Activated CD4-positive, alpha-beta T cell treated with anti-CD3 and anti-CD28 coated beads for 36 hours (primary cell): ENCODE measurements at regions of chr6 and their contacts with region 1.

Region 1: GRCh38 chr6:139262519-139263300 is 29.1 kb downstream of the TXLNB start:
- DNase-seq: peak; percentile 56
- ATAC-seq: peak; percentile 97
- H3K4me3 Mint-ChIP-seq: peak overlapping the region; percentile 65
- H3K27ac Mint-ChIP-seq: peak overlapping the region; percentile 93
- H3K4me1 Mint-ChIP-seq: peaks cover 38% of the 10 kb centered on the region
- H3K27me3 Mint-ChIP-seq: no peaks in the 10 kb centered on the region

Region 2: GRCh38 chr6:139153855-139154254 is 108.9 kb before region 1 on chr6:
- CTCF ChIA-PET with region 1: no interaction called
- POLR2A ChIA-PET with region 1: no interaction called
- intact Hi-C with region 1: loop called (anchors 2 kb)
- DNase-seq: no peak
- ATAC-seq: peak; percentile 47
- H3K4me3 Mint-ChIP-seq: peak overlapping the region; percentile 30
- H3K27ac Mint-ChIP-seq: peak overlapping the region; percentile 100
- H3K4me1 Mint-ChIP-seq: peaks cover 82% of the 10 kb centered on the region
- H3K27me3 Mint-ChIP-seq: no peaks in the 10 kb centered on the region

Region 3: GRCh38 chr6:139250296-139251044 is 12.2 kb before region 1 on chr6:
- CTCF ChIA-PET with region 1: interaction called, 16 read pairs
- POLR2A ChIA-PET with region 1: interaction called, 4 read pairs
- intact Hi-C with region 1: loop called in 1 of 2 experiments (anchors 1 kb)
- DNase-seq: peak; percentile 76
- ATAC-seq: peak; percentile 83
- H3K4me3 Mint-ChIP-seq: no peak overlapping the region
- H3K27ac Mint-ChIP-seq: peak overlapping the region; percentile 76
- H3K4me1 Mint-ChIP-seq: peaks cover 52% of the 10 kb centered on the region
- H3K27me3 Mint-ChIP-seq: no peaks in the 10 kb centered on the region

Region 4: GRCh38 chr6:139278190-139278589 is 15.5 kb after region 1 on chr6:
- CTCF ChIA-PET with region 1: interaction called, 10 read pairs
- POLR2A ChIA-PET with region 1: interaction called, 4 read pairs
- intact Hi-C with region 1: loop called (anchors 2 kb)
- DNase-seq: no peak
- ATAC-seq: no peak
- H3K4me3 Mint-ChIP-seq: no peak overlapping the region
- H3K27ac Mint-ChIP-seq: no peak overlapping the region
- H3K4me1 Mint-ChIP-seq: peaks cover 28% of the 10 kb centered on the region
- H3K27me3 Mint-ChIP-seq: no peaks in the 10 kb centered on the region

Region 5: DNA sequence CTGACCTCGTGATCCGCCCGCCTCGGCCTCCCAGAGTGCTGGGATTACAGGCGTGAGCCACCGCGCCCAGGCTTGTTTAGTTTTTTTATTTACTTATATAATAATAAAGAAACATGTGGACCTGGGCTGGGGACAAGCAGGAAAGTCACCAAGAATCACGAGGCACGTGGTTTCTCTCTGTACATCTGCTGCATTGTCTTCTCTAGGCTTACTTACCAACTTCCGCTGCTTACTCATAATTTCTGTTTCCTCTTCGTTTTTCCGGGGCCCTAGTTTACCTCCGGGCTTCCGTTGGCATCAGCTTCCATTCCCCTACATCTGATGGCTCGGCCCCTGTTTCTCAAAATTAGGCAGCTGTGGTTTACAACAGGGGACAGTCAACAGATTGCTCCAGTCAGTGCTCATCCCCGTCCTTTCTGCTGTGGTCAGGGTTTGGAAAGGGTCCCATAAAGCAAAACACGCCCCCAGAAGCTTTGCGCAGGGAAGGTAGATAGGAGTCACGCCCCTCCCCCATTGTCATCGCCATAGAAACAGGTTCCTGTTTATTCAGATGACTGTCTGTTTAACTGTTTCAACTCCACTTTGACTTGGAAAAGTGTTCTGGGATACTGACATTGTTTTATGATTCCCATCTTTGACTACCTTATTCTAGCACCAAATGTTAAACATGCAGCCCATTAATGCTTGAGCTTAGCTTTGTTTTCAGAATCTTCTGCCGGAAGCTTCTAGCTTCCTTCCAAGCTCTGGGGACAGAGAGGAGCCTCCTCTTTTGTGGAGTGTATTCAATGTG is 61.0 kb after region 1 on chr6:
- CTCF ChIA-PET with region 1: interaction called, 4 read pairs
- POLR2A ChIA-PET with region 1: no interaction called
- intact Hi-C with region 1: loop called (anchors 1 kb)
- DNase-seq: peak; percentile 84
- ATAC-seq: peak; percentile 87
- H3K4me3 Mint-ChIP-seq: peak overlapping the region; percentile 66
- H3K27ac Mint-ChIP-seq: peak overlapping the region; percentile 94
- H3K4me1 Mint-ChIP-seq: peaks cover 32% of the 10 kb centered on the region
- H3K27me3 Mint-ChIP-seq: no peaks in the 10 kb centered on the region